K562 (cell line): ENCODE measurements at regions of chr11 and their contacts with region 1.

Region 1: DNA sequence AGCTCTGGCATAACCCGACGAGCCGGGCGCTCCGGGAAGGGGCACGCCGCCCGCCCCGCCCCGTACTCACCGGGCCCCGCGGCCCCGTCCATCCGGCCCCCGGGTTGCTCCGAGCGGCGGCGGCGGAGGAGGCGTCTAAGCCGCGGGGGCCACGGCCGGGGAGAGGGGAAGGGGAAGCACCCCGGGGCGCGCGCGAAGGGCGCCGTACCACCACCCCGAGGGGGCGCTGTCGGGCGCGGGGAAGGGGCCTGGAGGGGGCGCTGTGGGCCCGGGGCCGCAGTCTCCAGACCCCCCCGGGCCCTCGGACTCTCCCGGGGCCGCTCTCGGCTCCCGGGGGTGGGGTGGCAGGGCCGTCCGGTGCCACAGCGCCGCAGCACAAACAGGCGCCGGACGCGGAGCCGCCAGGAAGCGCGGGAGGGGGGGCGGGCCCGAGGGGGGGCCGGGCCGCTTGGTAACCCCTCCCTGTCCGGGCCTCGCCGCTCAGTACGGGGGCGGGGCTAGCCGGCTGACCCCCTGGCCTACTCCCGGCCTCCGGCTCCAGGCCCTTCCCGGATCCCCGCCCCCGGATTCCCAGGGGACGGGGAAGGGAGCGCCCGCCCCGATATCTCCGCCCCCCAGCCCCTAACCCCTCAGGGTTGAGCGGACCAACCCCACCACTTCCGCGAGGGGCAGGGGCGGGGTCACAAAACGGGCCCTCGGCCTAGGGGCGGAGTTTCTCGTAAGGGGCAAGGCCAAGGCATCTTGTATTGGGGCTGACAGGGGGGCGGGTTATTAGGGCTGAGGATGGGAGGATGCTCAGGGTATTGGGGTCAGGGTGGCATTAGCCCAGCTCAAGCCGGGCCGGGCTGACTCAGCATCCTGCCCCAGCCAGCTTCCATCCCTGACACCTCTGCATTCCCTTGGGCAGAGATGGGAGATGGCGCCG is at the starts of genes EML3 and ROM1:
- DNase-seq: peak; percentile 91 to 95 (median 92)
- ATAC-seq: peak; percentile 83
- H3K4me3 ChIP-seq: peak within 1 kb of the TSS; percentile 75
- H3K27ac ChIP-seq: peak within 1 kb of the TSS; percentile 90
- H3K4me1 ChIP-seq: peaks cover 29 to 65% of the 10 kb centered on the region in 2 experiments
- H3K27me3 ChIP-seq: no peaks in the 10 kb centered on the region
- CTCF ChIP-seq: peak; percentile 79 to 100 (median 100)
- EP300 ChIP-seq: no peak
- POLR2A ChIP-seq: no peak
- RAD21 ChIP-seq: peak; percentile 56 to 64
- polyA plus RNA-seq, gene EML3: 0.32 to 0.59 TPM
- polyA plus RNA-seq, gene ROM1: 0.75 to 1.4 TPM

Region 2: GRCh38 chr11:62645956-62646824 is 33.6 kb after region 1 on chr11 and contains the start of gene GANAB:
- CTCF ChIA-PET with region 1: interaction called, 4 read pairs
- POLR2A ChIA-PET with region 1: no interaction called
- in situ Hi-C with region 1: no loop called
- intact Hi-C with region 1: loop called (anchors 2 kb)
- DNase-seq: peak; percentile 97 to 100 (median 98)
- ATAC-seq: peak; percentile 98
- H3K4me3 ChIP-seq: peak within 1 kb of the TSS; percentile 97
- H3K27ac ChIP-seq: peak within 1 kb of the TSS; percentile 96
- H3K4me1 ChIP-seq: peaks cover 12 to 38% of the 10 kb centered on the region in 2 experiments
- H3K27me3 ChIP-seq: no peaks in the 10 kb centered on the region
- CTCF ChIP-seq: no peak
- EP300 ChIP-seq: peak; percentile 12; the same call in 1 of the 2 replicates
- POLR2A ChIP-seq: peak; percentile 94
- RAD21 ChIP-seq: no peak
- polyA plus RNA-seq, gene GANAB: 6.5 to 17.9 TPM

Region 3: DNA sequence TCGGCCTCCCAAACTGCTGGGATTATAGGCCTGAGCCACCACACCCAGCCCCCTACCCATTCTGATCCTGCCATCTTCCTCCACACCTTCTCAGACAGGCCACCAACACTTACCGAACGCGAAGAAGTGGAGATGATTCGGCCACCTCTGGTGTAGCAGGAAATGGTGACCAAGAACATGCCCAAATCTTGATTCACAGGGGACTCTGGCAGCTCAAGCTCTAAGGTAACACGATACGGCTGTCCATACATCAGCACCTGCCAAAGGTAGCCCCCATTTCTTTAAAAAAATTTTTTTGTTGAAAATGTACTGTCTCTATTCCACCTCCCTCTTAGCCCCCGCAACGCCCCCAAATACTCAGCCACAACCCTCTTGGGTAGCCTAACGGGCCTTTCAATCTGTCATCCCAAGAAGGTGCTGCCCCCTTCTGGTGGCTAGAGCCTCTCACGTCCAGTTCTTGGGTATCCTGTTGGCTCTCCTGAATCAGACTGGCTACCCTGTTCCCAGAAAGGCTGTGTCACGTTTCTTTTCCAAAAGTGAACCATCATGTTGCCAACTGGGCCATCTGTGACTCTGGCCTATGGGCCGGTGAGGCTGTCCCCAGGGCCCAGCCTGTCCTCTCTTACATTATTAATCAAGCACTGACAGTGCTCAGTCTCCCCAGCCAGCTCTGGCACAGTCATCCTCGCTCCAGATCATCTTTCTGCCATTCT is 82.0 kb after region 1 on chr11:
- CTCF ChIA-PET with region 1: interaction called, 17 read pairs
- POLR2A ChIA-PET with region 1: no interaction called
- in situ Hi-C with region 1: no loop called
- intact Hi-C with region 1: loop called (anchors 5 kb)
- DNase-seq: peak; percentile 73 to 90 (median 78)
- ATAC-seq: peak; percentile 98
- H3K4me3 ChIP-seq: no peak overlapping the region
- H3K27ac ChIP-seq: no peak overlapping the region; the same call in 2 of the 3 replicates
- H3K4me1 ChIP-seq: no peaks in the 10 kb centered on the region
- H3K27me3 ChIP-seq: no peaks in the 10 kb centered on the region
- CTCF ChIP-seq: peak; percentile 87 to 90 (median 87)
- EP300 ChIP-seq: no peak
- POLR2A ChIP-seq: no peak
- RAD21 ChIP-seq: peak; percentile 77 to 84

Region 4: GRCh38 chr11:62875698-62876478 is 263.3 kb after region 1 on chr11:
- CTCF ChIA-PET with region 1: no interaction called
- POLR2A ChIA-PET with region 1: no interaction called
- in situ Hi-C with region 1: no loop called
- intact Hi-C with region 1: no loop called
- DNase-seq: no peak
- ATAC-seq: no peak
- H3K4me3 ChIP-seq: no peak overlapping the region
- H3K27ac ChIP-seq: peak overlapping the region; percentile 50; the same call in 1 of the 3 replicates
- H3K4me1 ChIP-seq: peaks cover 32 to 36% of the 10 kb centered on the region in 2 experiments
- H3K27me3 ChIP-seq: no peaks in the 10 kb centered on the region
- CTCF ChIP-seq: peak in 1 of 3 experiments; percentile 17; a peak in 1 of 6 replicates
- EP300 ChIP-seq: no peak
- POLR2A ChIP-seq: no peak
- RAD21 ChIP-seq: no peak